ENCODE measurements at regions of chr1 and their contacts with region 1.

Region 1: DNA sequence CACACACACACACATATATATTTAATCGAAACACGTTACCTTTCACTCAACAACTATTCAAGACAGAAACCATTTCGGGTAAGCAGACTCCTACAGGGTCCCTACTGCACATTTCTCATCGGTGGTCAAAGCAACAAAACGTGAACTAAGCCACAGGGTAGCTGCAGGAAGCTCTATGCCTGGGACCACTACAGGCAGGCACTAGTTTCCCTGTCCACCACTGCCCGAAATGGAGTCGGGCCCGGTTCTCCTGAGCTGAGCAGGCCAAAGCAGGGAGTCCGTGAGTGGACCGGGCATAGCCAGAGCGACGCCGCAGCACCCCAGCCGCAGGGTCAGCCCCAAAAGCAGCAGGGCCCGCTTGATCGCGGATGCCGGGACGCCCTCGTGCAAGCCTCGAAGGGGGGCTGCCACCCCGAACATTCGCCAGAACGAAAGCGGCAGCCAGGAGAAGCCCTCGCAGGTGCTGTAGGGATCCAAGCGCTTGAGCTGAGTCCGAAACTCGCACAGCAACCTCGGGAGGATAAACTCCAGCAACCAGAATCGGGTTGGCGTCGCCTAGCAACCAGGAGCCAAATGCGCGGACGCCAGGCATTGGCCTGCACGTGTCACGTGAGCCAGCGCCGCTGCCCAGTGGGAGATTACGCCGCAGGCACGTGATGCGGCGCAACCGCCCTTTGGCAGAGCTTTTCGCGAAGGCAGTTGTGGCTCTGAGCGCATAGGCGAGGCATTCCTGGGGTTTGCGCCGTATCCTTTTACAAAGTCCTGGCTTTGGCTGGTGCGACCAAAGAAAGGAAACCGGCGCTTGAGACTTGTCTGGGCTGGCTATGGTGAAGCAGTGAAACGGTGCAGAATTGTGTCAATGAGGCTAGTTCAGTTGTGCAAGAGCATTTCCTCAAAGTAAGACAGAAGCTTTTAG is 13.9 kb upstream of the DDI2 start:
- DNase-seq: peak; percentile 98
- H3K4me3 ChIP-seq: peak overlapping the region; percentile 61
- H3K27ac ChIP-seq: peak overlapping the region; percentile 25
- H3K4me1 ChIP-seq: peaks cover 11% of the 10 kb centered on the region
- H3K27me3 ChIP-seq: no peaks in the 10 kb centered on the region
- CTCF ChIP-seq: no peak

Region 2: DNA sequence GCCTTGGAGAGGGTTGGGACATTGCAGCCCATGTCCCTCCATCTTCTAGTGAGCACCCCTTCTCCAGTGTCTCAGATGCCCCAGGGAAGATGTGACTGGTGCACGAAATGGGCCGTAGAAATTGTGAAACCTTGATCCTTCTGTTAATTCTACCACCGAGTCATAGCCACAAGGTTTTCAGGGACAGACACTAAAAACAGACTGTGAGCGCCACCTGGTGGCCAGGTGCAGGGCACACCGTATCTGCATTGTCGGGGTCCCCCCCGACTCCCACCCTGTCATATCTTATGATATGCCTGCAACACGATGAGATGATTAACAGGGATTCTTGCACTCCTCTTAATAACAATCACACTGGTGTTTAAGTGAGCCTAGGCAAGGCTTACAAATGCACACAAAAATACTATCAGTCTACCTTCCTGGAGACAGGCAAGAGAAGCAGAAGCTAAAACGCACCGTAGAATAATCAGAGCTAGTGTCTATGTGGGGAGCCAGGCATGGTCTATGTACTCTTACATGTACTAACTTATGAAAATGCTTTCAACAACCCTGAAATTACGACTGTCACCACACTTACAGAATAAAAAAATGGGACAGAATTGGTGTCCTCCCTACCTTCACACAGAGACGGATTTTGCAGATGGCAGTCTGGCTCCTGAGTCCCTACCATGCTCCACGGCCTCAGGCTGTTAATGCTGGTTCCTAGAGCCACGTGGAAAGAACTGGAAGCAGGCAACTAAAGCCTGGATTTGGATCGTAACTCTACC is 298.4 kb before region 1 on chr1:
- CTCF ChIA-PET with region 1: no interaction called
- POLR2A ChIA-PET with region 1: no interaction called
- intact Hi-C with region 1: no loop called
- DNase-seq: peak; percentile 47
- H3K4me3 ChIP-seq: no peak overlapping the region
- H3K27ac ChIP-seq: no peak overlapping the region
- H3K4me1 ChIP-seq: no peaks in the 10 kb centered on the region
- H3K27me3 ChIP-seq: no peaks in the 10 kb centered on the region
- CTCF ChIP-seq: peak; percentile 93

Region 3: DNA sequence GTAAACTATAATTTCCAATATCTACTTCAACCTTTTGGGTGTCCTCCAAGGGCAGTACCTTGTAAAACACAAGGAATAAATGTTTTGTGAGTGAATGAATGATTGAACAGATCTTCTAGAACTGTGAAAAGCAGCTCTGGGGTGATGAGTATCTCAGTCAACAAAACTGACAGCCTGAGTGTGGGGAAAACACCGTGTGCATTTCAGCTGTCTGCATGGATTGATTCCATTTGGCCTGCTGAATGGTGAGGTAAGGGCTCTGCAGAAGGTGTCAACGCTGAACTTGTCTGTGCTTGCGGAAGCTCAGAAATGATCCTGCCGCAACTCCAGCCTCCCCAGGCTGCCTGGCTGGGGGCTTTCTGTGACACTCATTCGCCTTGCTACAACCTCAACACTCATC is 11.0 kb before region 1 on chr1:
- CTCF ChIA-PET with region 1: interaction called, 10 read pairs
- POLR2A ChIA-PET with region 1: interaction called, 13 read pairs
- intact Hi-C with region 1: no loop called
- DNase-seq: no peak
- H3K4me3 ChIP-seq: no peak overlapping the region
- H3K27ac ChIP-seq: no peak overlapping the region
- H3K4me1 ChIP-seq: no peaks in the 10 kb centered on the region
- H3K27me3 ChIP-seq: peaks cover 4% of the 10 kb centered on the region
- CTCF ChIP-seq: no peak

Region 4: DNA sequence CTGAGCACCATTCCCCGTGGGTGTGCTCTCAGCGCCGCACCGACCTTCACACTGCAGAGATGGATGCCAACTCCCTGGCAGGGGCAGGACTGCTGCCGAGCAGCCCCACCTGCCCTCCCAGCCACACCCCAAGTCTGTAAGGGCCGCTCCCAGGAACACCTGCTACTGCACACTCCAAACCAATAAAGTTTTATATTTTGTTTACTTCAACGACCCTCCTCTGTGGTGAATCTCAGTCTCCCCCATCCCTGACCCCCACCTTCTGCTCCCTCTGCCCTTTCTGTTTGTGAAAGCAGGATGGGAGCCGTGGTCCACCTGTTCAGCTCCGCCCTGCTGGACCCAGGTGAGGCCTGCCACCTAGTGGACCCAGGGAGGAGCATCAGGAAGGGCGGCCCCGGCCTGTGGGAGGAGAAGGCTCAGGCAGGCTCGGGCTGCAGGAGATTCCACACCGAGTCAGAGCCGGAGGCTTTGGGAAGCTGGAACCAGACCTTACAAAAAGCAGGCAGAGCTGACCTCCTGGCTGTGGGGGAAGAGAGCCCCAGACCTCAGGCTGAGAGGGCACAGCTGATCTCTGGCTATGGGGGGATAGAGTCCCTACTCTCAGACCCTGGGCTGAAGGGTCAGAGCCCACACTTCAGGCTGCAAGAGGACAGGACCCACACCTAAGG is 138.0 kb after region 1 on chr1:
- CTCF ChIA-PET with region 1: no interaction called
- POLR2A ChIA-PET with region 1: no interaction called
- intact Hi-C with region 1: loop called (anchors 5 kb)
- DNase-seq: peak; percentile 65
- H3K4me3 ChIP-seq: no peak overlapping the region
- H3K27ac ChIP-seq: no peak overlapping the region
- H3K4me1 ChIP-seq: no peaks in the 10 kb centered on the region
- H3K27me3 ChIP-seq: no peaks in the 10 kb centered on the region
- CTCF ChIP-seq: peak; percentile 77

Measured in A673 (cell line).